SK-N-SH (cell line): ENCODE measurements at regions of chr6 and their contacts with region 1.

Region 1: GRCh38 chr6:43774776-43775534 is 4.9 kb downstream of the VEGFA start:
- DNase-seq: peak; percentile 91
- H3K4me3 ChIP-seq: peak overlapping the region; percentile 94 to 95; a peak in 3 of 4 replicates
- H3K27ac ChIP-seq: peak overlapping the region; percentile 33 to 93; a peak in 2 of 4 replicates
- H3K4me1 ChIP-seq: peaks cover 14 to 64% of the 10 kb centered on the region in 2 experiments
- H3K27me3 ChIP-seq: no peaks in the 10 kb centered on the region
- CTCF ChIP-seq: peak; percentile 81
- EP300 ChIP-seq: no peak
- RAD21 ChIP-seq: peak; percentile 54

Region 2: GRCh38 chr6:43355862-43356590 is 418.9 kb before region 1 on chr6:
- CTCF ChIA-PET with region 1: no interaction called
- POLR2A ChIA-PET with region 1: no interaction called
- DNase-seq: peak; percentile 16
- H3K4me3 ChIP-seq: no peak overlapping the region
- H3K27ac ChIP-seq: no peak overlapping the region
- H3K4me1 ChIP-seq: peaks cover 0 to 4% of the 10 kb centered on the region in 2 experiments; a peak in 2 of 4 replicates
- H3K27me3 ChIP-seq: no peaks in the 10 kb centered on the region
- CTCF ChIP-seq: peak; percentile 34
- EP300 ChIP-seq: no peak
- RAD21 ChIP-seq: peak; percentile 43

Region 3: GRCh38 chr6:43790025-43790523 is 15.1 kb after region 1 on chr6:
- CTCF ChIA-PET with region 1: interaction called, 35 read pairs
- POLR2A ChIA-PET with region 1: interaction called, 4 read pairs
- DNase-seq: no peak
- H3K4me3 ChIP-seq: no peak overlapping the region
- H3K27ac ChIP-seq: no peak overlapping the region; a peak in 1 of 4 replicates
- H3K4me1 ChIP-seq: peaks cover 0 to 5% of the 10 kb centered on the region in 2 experiments; a peak in 1 of 4 replicates
- H3K27me3 ChIP-seq: no peaks in the 10 kb centered on the region
- CTCF ChIP-seq: no peak
- EP300 ChIP-seq: no peak
- RAD21 ChIP-seq: no peak

Region 4: DNA sequence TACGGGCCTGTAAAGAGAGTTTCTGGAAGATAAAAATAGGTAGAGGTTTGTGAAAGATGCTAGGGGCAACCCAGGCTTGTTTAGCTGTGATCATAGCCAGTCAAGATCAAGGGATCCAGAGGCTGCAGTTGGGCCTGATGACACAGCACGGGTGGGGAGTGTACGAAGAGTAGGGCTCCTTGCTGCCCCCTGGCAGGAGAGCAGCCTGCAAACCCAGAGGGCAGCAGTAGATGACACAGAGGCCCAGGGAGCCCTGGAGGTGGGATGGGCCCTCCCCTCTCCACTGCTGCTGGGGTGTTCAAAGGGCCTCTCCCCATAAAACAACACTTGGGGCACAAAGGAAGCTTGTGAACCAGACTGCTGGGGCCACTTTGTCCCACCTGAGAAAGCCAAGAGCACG is 42.2 kb after region 1 on chr6:
- CTCF ChIA-PET with region 1: interaction called, 14 read pairs
- POLR2A ChIA-PET with region 1: no interaction called
- DNase-seq: no peak
- H3K4me3 ChIP-seq: no peak overlapping the region
- H3K27ac ChIP-seq: no peak overlapping the region
- H3K4me1 ChIP-seq: no peaks in the 10 kb centered on the region
- H3K27me3 ChIP-seq: no peaks in the 10 kb centered on the region
- CTCF ChIP-seq: peak; percentile 28; the same call in 1 of the 2 replicates
- EP300 ChIP-seq: no peak
- RAD21 ChIP-seq: no peak

Region 5: DNA sequence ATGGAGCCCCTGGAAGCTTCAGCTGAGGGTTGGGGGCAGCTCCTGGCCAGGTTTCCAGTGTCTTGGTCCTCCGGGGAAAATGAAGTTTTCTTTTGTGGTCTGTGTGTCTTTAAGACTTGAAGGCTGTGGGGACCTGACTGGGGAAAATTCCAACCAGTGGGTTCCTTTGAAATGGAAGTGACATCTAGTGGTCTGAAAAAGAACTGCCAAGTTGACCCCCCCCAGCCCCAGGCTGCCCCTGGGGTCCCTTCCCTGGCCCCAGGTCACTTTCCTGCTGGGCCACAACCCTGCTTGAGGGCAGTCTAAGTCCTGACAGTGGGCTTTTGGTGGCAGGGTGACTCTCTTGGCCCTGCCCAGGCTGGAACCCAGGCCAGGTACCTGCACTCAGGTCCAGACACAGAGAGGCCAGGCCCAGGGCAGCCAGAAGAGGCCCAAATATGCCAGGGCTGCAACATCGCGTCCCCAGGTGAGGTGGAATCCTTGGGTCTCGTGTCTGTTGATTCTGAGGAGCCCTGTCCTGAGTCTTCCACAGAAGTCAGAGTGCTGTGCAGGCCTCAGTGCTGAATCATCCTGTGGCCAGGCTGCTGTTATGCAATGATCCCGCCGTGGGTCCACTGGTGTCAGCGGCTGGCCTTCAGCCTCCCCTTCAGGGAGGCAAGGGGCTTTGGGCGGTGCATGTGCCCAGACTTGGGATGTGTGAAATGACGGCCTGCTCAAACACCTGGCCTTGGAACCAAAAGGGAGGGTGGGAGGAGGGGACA is 63.5 kb after region 1 on chr6:
- CTCF ChIA-PET with region 1: interaction called, 26 read pairs
- POLR2A ChIA-PET with region 1: no interaction called
- DNase-seq: peak; percentile 62
- H3K4me3 ChIP-seq: no peak overlapping the region
- H3K27ac ChIP-seq: peak overlapping the region in 1 of 2 experiments; percentile 9; a peak in 1 of 4 replicates
- H3K4me1 ChIP-seq: peaks cover 3 to 27% of the 10 kb centered on the region in 2 experiments; a peak in 2 of 4 replicates
- H3K27me3 ChIP-seq: no peaks in the 10 kb centered on the region
- CTCF ChIP-seq: peak; percentile 60
- EP300 ChIP-seq: no peak
- RAD21 ChIP-seq: peak; percentile 60

Region 6: DNA sequence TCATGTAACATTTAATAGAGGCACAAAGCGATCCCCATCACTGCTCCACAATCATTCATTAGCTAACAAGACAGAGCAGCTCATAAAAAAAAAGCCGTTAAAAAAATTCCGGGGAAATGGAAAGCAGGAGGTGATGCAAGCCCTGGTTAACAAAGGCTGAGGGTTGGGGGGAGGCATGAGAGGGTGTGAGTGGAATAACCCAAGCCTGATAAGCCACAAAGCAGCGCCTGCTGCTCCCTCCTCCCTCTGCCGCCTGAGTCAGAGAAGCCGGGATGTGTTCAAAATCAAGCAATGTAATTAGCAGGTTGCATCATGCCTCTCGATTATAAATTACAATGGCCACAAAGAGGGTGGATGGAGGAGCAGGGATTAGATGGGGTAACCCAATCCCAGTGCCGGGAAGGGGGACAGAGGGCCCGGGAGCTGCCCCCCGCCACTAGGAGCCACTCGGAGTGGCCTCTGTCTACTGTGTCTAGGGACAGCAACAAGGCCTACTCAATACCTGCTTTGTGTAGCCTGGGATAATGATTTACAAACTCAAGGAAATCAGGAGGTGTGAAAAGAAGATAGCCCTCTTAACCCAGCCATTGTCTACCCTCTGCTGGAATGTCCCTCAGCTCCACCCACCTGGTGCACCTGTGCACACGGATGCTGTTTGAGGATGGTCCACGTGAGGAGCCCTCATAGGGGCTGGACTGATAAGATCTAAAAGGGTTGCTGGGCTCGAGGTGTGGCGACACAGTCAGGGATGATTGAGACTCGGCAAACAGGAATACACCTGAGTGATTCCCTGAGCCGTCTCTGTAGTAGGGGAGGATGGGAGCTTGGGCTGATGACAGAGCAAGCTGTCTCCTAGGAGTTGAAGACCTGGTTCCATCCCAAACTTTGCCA is 151.9 kb after region 1 on chr6:
- CTCF ChIA-PET with region 1: interaction called, 26 read pairs
- POLR2A ChIA-PET with region 1: interaction called, 4 read pairs
- DNase-seq: peak; percentile 81
- H3K4me3 ChIP-seq: no peak overlapping the region
- H3K27ac ChIP-seq: peak overlapping the region; percentile 27 to 98; a peak in 3 of 4 replicates
- H3K4me1 ChIP-seq: peaks cover 40 to 82% of the 10 kb centered on the region in 2 experiments
- H3K27me3 ChIP-seq: no peaks in the 10 kb centered on the region
- CTCF ChIP-seq: no peak
- EP300 ChIP-seq: peak in 1 of 2 experiments; percentile 51; a peak in 2 of 4 replicates
- RAD21 ChIP-seq: peak; percentile 34

Region 7: DNA sequence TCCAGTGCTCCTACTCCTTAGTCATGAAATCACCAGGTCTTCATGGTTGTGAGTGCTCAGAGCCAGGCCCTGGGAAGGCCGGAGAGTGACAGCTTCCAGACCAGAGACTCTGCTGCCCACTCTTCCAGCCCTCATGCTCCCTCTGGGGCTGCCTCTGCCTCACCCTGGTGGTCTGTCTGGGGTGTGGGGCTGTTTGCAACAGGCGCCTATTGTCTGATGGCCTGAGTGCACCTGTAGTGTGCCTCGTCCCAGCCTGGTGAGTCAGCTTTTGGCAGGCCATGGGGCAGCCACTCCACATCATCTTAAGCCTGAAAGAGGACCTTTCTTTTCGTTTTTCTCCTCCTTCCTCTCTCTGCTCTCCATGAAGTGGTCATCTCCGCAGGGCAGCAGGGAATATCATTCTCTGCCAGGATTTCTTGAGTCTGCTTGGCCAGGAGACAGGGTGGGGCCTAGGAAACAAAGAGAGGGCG is 168.9 kb after region 1 on chr6:
- CTCF ChIA-PET with region 1: interaction called, 140 read pairs
- POLR2A ChIA-PET with region 1: interaction called, 28 read pairs
- DNase-seq: no peak
- H3K4me3 ChIP-seq: no peak overlapping the region
- H3K27ac ChIP-seq: peak overlapping the region in 1 of 2 experiments; percentile 100; a peak in 2 of 4 replicates
- H3K4me1 ChIP-seq: peaks cover 0 to 51% of the 10 kb centered on the region in 2 experiments; a peak in 3 of 4 replicates
- H3K27me3 ChIP-seq: no peaks in the 10 kb centered on the region
- CTCF ChIP-seq: no peak
- EP300 ChIP-seq: no peak
- RAD21 ChIP-seq: no peak